ENCODE measurements at regions of chr17 and their contacts with region 1.

Region 1: DNA sequence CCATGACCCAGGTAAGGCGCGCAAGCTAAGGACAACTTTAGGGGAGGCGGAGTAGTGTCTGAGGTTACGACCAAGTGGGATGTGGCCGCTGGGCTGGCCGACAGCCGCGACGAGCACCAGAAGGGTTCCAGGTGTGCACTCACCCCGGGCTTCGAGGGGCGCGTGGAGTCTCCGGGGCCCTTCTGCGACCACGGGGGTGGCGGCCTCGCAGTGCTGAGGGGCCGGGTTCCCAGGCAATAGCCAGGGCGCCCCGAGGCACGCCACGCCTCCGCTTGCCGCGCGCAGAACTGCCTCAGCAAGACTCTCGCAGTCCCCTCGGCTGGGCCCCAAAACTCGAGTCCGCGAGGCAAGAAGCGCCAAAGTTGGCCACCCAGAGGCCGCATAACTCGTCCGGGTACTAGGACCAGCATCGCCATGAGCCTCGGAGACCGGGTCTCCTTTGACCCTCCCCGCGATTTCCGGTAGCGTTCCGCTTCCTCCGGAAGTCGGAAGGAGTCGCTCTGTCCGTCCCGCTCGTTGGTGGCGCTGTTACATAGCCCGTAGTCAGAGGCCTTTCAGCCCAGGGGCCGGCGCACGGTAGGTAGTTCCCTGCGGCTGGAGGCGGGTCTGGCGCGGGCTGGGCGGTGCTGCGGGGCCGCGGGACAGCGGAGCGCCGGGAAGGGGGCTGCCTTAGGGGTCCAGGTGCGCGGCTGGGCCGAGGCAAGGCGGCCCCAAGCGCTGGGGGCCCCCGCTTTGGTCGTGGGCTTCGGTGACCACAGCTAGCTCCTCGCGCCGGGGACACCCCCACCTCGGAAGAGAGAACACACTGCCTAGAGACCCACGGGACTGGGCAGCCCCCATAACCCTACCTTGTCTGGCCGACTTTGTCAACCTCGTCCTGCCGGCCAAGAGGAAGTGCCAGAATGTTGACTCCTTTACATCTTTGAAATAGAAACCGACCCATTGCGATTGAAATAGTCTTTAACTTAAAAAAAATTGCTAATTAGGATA is at the starts of genes ADPRM and SCO1:
- DNase-seq: peak; percentile 60
- H3K4me3 ChIP-seq: peak within 1 kb of the TSS; percentile 97
- H3K27me3 ChIP-seq: no peaks in the 10 kb centered on the region
- CTCF ChIP-seq: peak; percentile 60
- polyA plus RNA-seq, gene ADPRM: 10.8 and 19.7 TPM in 2 replicates
- polyA plus RNA-seq, gene SCO1: 21.7 and 31.1 TPM in 2 replicates

Region 2: DNA sequence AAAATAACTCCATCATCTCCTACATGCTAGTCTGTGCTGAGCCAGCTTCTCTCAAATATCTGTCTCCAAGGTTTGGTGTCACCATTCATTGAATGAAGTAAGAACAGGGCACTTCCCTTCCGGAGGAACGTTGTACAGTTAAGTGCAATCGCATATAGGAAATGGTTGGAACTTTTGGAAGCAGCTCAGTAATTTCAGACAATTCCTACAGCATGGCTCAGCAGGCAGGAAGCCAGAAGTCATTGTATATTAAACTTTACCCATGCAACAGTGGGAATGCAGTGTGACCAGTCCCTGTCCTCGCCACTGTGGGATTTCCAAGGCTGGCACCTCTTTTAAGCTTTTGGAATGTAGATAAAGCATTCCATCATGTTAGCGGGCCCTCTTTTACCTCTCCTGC is 96.8 kb before region 1 on chr17:
- CTCF ChIA-PET with region 1: no interaction called
- POLR2A ChIA-PET with region 1: no interaction called
- DNase-seq: peak; percentile 6
- H3K4me3 ChIP-seq: no peak overlapping the region
- H3K27me3 ChIP-seq: no peaks in the 10 kb centered on the region
- CTCF ChIP-seq: no peak

Region 3: DNA sequence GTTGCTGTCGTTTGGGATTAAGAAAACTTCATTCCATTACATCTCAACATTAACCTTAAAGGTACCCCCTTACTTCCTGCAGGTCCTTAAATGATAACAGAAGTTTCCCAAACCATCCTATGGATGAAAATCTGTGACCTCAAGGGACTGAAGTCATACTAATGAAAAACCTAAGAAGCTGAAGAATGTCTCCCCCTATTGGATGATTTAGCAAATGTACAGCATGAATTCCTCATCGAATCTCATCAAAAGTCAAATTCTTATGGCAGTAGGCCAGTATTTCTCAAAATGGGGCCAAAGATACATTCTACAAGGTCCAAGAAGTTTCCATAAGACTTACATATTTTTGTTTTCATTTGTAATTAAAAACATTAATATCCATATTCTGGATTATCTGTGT is 13.5 kb before region 1 on chr17:
- CTCF ChIA-PET with region 1: interaction called, 13 read pairs
- POLR2A ChIA-PET with region 1: no interaction called
- DNase-seq: no peak
- H3K4me3 ChIP-seq: no peak overlapping the region
- H3K27me3 ChIP-seq: no peaks in the 10 kb centered on the region
- CTCF ChIP-seq: peak; percentile 47

Measured in BJ (cell line).